Caco-2 (cell line): ENCODE measurements at regions of chr1 and their contacts with region 1.

Region 1: DNA sequence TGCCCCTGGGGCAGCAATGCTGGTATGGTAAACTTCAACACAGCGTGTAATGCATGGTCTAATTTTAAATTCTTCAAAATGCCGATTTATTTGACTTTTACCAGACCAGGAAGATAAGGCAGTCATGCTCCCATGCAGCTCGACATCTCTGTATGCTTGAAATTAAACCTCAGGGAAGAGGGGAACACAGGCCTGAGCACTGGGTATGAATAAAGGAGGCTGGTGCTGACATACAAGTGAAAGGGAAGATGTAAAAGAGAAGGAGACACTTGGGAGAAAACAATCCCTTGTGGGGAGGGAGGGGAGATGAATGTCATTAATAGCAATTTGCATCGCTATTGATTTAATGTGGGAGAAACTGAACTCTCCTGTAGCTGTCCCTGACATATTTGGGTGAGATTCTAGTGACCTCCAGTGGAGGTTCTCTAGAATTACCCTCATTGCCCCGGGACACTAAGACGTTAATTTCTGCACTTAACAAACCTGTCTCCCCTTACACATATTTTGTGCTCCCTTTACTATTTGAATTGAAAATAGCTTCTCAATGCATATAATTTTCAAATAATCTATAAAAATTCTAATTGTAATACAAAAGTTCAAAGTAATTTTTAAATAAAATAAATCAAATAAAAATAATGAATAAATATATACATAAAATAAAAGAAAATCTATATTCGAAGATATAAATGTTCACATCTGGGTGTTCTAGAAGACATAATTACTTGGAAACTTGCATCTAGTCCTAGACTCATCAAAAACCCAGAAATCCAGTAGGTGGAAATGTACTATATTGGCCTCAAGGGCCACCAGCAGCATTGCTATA is 283.1 kb downstream of the LMX1A start:
- DNase-seq: peak in 1 of 2 experiments; percentile 56
- H3K4me3 ChIP-seq: no peak overlapping the region
- H3K4me3 Mint-ChIP-seq: no peak overlapping the region
- H3K27ac Mint-ChIP-seq: no peak overlapping the region
- H3K4me1 ChIP-seq: 0 out of 2 replicates have a peak, but pooled peaks cover 4% of the 10 kb centered on the region
- H3K4me1 Mint-ChIP-seq: peaks cover 25% of the 10 kb centered on the region
- H3K27me3 ChIP-seq: no peaks in the 10 kb centered on the region
- H3K27me3 Mint-ChIP-seq: no peaks in the 10 kb centered on the region
- CTCF ChIP-seq: peak; percentile 78 to 82

Region 2: DNA sequence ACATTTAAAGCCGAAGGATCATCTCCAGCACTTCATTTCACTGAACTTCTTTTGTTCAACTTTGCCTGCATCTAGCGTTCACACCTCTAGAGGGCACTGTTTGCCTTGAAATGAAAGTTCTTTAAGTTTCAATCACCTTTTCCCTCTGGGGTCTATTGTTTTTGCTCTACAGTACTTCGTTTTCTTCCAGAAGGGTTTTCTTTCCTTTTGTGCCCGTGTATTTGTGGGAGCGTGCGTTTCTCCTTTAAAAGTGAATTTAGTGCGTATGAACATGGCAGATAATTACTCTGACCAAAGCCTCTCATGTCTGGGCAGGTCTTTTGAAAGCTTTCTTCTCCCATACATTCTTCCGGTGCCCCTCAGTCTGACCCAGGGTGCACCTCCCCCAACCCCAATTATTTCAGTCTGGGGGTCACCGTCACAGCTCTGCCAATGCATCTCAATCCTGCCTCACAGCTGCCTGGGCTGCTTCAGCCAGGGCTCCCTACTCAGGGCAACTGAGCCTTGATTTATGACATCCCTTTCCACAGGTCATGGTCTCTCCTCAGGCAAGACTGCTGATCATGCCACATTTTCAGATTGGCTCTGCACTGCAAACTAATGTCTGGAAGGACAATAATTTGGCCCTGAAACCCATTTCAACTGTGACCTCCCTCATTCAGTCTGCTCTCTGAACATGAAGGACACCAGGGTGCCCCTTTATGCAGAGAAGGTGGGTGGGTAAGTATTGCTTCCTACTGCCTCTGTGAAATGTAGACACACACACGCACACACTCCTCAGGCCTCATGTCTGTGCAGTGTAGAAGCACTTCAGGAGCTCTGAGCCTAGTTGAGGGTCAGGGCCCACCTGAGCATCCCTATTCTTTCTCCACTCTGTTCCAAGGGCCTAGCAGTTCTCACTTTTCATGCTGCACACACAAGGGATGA is 1663.1 kb before region 1 on chr1:
- CTCF ChIA-PET with region 1: no interaction called
- POLR2A ChIA-PET with region 1: no interaction called
- intact Hi-C with region 1: loop called (anchors 1 kb)
- DNase-seq: peak; percentile 51 to 62
- H3K4me3 ChIP-seq: no peak overlapping the region
- H3K4me3 Mint-ChIP-seq: no peak overlapping the region
- H3K27ac Mint-ChIP-seq: no peak overlapping the region
- H3K4me1 ChIP-seq: no peaks in the 10 kb centered on the region
- H3K4me1 Mint-ChIP-seq: no peaks in the 10 kb centered on the region
- H3K27me3 ChIP-seq: no peaks in the 10 kb centered on the region
- H3K27me3 Mint-ChIP-seq: peaks cover 6% of the 10 kb centered on the region
- CTCF ChIP-seq: peak; percentile 77 to 82

Region 3: DNA sequence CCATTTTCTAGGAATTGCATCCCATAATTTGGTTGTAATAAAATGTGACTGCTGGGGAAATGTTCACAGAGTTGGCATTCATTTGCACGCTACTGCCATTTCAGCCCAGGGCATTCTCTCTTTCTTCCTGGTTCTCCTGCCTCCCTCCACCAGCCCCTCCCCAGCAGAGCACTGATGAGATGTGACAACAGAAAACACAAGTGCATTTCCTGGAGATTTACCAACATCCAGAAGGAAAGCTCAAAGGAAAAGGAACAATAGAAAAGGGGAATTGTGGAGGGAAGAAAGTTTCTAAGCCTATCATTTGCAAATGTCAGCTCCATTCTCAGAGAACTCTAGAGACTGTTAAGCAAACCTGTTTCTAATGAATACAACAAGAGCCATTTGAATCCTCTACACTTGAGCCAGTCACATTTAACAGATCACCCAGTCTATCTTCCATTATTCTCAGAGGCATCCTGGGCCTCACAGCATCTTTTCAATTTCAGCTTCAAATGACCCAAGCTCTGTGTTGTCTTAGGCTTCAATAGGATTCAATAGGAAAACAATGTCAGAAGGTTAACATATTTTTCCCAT is 910.0 kb before region 1 on chr1:
- CTCF ChIA-PET with region 1: no interaction called
- POLR2A ChIA-PET with region 1: no interaction called
- intact Hi-C with region 1: loop called (anchors 2 kb)
- DNase-seq: no peak
- H3K4me3 ChIP-seq: no peak overlapping the region
- H3K4me3 Mint-ChIP-seq: no peak overlapping the region
- H3K27ac Mint-ChIP-seq: no peak overlapping the region
- H3K4me1 ChIP-seq: no peaks in the 10 kb centered on the region
- H3K4me1 Mint-ChIP-seq: no peaks in the 10 kb centered on the region
- H3K27me3 ChIP-seq: no peaks in the 10 kb centered on the region; the same call in 1 of the 2 replicates
- H3K27me3 Mint-ChIP-seq: peaks cover 15% of the 10 kb centered on the region
- CTCF ChIP-seq: no peak

Region 4: GRCh38 chr1:164803366-164803765 is 270.0 kb before region 1 on chr1:
- CTCF ChIA-PET with region 1: no interaction called
- POLR2A ChIA-PET with region 1: no interaction called
- intact Hi-C with region 1: loop called (anchors 5 kb)
- DNase-seq: no peak
- H3K4me3 ChIP-seq: no peak overlapping the region
- H3K4me3 Mint-ChIP-seq: no peak overlapping the region
- H3K27ac Mint-ChIP-seq: no peak overlapping the region
- H3K4me1 ChIP-seq: peaks cover 24% of the 10 kb centered on the region
- H3K4me1 Mint-ChIP-seq: peaks cover 20% of the 10 kb centered on the region
- H3K27me3 ChIP-seq: no peaks in the 10 kb centered on the region
- H3K27me3 Mint-ChIP-seq: no peaks in the 10 kb centered on the region
- CTCF ChIP-seq: no peak

Region 5: DNA sequence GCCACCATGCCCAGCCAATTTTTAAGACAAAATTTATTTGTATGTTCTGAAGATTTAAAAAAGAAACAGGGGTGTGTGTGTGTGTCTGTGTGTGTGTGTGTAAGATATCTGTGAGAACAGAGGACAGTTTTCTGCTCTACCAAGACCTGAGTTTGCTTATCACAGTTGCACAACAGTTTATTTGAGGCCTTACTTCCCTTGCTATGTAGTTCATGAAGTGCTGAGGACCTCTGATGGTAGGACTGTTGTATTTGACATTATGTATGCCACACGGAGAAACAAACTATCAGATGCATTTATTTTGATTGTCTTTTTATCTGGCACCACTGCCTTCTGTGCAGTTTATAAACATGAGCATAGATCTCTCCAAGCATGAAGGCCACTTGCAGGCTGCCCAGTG is 159.2 kb before region 1 on chr1:
- CTCF ChIA-PET with region 1: no interaction called
- POLR2A ChIA-PET with region 1: no interaction called
- intact Hi-C with region 1: loop called (anchors 1 kb)
- DNase-seq: peak in 1 of 2 experiments; percentile 39
- H3K4me3 ChIP-seq: no peak overlapping the region
- H3K4me3 Mint-ChIP-seq: no peak overlapping the region
- H3K27ac Mint-ChIP-seq: no peak overlapping the region
- H3K4me1 ChIP-seq: no peaks in the 10 kb centered on the region
- H3K4me1 Mint-ChIP-seq: no peaks in the 10 kb centered on the region
- H3K27me3 ChIP-seq: no peaks in the 10 kb centered on the region; the same call in 1 of the 2 replicates
- H3K27me3 Mint-ChIP-seq: peaks cover 6% of the 10 kb centered on the region
- CTCF ChIP-seq: peak; percentile 17 to 32

Region 6: DNA sequence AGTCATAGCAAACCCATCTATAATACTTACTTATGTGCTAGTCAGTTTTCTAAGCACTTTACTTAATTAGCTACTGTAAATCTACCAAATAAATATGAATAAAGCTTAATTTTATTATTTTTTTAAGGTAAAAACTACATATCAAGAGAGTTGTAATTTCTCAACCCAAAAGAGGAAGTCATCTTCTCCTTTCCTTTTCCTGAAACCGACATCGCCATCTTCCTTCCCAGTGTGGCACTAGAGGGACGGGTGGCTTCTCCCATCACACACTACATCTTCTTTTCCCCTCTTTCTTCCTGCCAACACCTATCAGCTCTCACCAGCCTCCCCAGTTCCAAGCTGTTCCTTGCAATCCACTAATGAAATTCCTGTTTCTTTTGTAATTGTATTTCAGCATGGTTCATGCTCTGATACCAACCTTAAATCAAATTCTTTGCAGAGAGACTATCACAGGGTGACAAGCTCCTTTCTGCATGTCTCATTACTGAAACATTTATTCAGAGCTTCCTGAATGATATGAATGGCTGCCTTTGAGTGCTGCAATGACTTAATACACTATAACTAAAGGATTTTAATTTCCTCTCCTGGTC is 1345.0 kb after region 1 on chr1:
- CTCF ChIA-PET with region 1: no interaction called
- POLR2A ChIA-PET with region 1: no interaction called
- intact Hi-C with region 1: no loop called
- DNase-seq: no peak
- H3K4me3 ChIP-seq: no peak overlapping the region
- H3K4me3 Mint-ChIP-seq: no peak overlapping the region
- H3K27ac Mint-ChIP-seq: no peak overlapping the region
- H3K4me1 ChIP-seq: no peaks in the 10 kb centered on the region
- H3K4me1 Mint-ChIP-seq: no peaks in the 10 kb centered on the region
- H3K27me3 ChIP-seq: no peaks in the 10 kb centered on the region
- H3K27me3 Mint-ChIP-seq: peaks cover 5% of the 10 kb centered on the region
- CTCF ChIP-seq: no peak